RWPE1 (cell line): ENCODE measurements at regions of chr1 and their contacts with region 1.

Region 1: GRCh38 chr1:163935738-163936374 is 614.1 kb downstream of the NUF2 start:
- DNase-seq: no peak
- H3K27ac ChIP-seq: no peak overlapping the region
- CTCF ChIP-seq: no peak

Region 2: DNA sequence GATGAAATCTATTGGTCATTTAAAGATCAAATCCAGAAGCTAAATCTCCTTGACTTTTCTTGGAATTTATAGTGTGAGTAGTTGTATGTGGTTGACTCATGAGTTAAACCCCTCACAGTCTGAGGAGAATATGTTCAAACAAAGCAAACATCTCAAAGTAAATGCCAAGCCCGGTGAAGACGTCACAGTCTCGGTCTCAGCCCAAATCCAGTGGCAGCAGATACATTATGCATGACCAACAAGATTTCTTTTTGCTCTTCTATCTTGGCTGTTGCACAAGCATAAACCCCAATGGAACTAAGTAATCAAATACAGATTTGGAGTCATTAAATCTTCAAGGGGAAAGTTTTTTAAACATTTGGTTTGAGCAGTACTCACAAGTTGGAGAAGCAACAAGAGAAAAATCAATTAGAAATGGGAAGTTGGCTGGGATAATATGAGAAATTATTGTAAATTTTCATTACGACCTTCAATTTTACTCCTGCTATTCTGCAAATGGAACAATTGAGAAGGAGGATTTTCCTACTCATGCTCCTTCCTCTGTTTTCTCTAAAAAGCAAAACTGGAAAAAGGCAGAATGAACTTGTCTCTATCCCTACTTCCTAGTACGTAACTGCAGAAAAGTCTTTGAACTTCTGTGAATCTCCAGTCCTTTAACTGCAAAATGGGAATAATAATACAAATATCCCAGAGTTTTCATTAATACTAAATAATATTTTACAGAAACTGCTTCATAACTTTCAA is 38.3 kb before region 1 on chr1:
- CTCF ChIA-PET with region 1: no interaction called
- POLR2A ChIA-PET with region 1: no interaction called
- DNase-seq: no peak
- H3K27ac ChIP-seq: no peak overlapping the region
- CTCF ChIP-seq: no peak

Region 3: DNA sequence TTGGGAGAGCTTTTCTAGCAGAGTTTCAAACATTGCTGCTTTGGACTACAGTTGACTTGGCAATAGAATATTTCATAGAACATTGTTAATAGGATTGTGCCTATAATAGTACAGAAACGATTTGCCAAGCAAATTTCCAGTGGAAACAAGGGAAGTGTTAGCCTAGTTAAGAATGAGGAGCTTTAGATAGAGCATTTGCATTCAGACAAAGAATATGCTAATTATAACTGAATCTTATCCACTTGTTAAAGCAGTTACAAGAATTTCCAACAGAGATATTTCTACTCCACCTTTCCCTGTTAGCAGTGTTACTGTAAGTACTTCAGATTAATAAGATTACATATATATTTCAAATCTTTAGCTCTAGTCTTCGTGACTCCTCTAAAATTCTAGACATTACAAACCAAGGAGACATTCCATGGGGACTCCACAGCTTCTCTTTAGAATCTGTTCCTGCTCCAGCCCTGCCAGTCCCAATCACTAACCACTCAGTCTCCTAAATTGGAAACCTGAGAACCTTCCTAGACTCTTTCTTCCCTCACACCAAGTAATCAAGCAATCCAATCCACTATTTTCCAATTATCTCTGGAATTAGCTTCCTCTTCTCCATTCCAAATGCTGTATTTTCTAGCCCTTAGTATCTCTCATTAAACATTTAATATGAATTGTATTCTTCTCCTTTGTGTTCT is 481.3 kb after region 1 on chr1:
- CTCF ChIA-PET with region 1: interaction called, 11 read pairs
- POLR2A ChIA-PET with region 1: no interaction called
- DNase-seq: no peak
- H3K27ac ChIP-seq: no peak overlapping the region
- CTCF ChIP-seq: no peak